ENCODE measurements at regions of chr12 and their contacts with region 1.

Region 1: DNA sequence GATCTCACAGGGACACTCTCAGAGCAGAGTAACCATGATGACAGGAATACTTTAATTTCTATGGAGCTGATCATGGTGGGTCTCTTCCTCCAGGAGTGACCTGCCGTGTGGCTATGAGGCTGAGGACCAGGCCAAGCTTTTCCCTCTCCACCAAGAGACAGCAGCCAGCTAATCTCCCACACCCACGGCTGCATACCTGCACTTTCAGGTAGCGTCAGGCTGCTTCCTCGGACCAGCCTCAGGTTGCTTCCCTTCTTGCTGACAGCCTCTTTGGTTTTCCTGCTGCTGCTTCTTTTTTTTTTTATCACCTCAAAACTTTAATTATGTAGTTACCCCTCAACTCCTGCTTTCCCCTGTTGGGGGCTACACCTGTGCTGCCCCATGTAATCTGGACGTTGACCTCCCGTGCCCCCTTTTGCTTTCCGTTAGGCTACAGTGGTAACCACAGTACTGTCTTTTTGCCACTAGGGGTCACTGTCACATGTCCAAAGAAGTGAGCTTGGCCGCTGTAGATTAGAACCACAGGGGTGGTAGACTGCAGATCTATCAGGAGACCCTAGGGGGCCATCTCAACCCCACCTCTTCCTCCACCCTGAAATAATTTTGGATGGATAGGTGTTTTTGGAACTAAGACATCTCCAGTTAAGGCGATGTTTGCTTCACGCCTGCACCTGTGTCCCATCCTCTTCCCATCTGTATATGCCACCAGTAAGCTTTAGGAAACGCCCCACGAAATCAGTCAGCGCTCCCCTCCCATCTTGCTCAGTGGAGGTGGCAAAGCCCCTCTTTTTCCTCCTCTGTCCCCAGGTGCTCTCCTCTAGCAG is 7.8 kb upstream of the PIP4K2C start:
- DNase-seq: peak; percentile 82
- ATAC-seq: peak; percentile 99
- H3K4me3 Mint-ChIP-seq: no peak overlapping the region
- H3K27ac Mint-ChIP-seq: no peak overlapping the region
- H3K4me1 Mint-ChIP-seq: peaks cover 4% of the 10 kb centered on the region
- H3K27me3 Mint-ChIP-seq: no peaks in the 10 kb centered on the region

Region 2: GRCh38 chr12:57609101-57609780 is 26.0 kb after region 1 on chr12:
- CTCF ChIA-PET with region 1: interaction called, 148 read pairs
- DNase-seq: no peak
- ATAC-seq: no peak
- H3K4me3 Mint-ChIP-seq: no peak overlapping the region
- H3K27ac Mint-ChIP-seq: no peak overlapping the region
- H3K4me1 Mint-ChIP-seq: peaks cover 17% of the 10 kb centered on the region
- H3K27me3 Mint-ChIP-seq: peaks cover 33% of the 10 kb centered on the region

Region 3: GRCh38 chr12:57627501-57628279 is 44.5 kb after region 1 on chr12:
- CTCF ChIA-PET with region 1: interaction called, 148 read pairs
- DNase-seq: peak; percentile 42
- ATAC-seq: peak; percentile 52
- H3K4me3 Mint-ChIP-seq: no peak overlapping the region
- H3K27ac Mint-ChIP-seq: no peak overlapping the region
- H3K4me1 Mint-ChIP-seq: peaks cover 11% of the 10 kb centered on the region
- H3K27me3 Mint-ChIP-seq: peaks cover 89% of the 10 kb centered on the region

Region 4: DNA sequence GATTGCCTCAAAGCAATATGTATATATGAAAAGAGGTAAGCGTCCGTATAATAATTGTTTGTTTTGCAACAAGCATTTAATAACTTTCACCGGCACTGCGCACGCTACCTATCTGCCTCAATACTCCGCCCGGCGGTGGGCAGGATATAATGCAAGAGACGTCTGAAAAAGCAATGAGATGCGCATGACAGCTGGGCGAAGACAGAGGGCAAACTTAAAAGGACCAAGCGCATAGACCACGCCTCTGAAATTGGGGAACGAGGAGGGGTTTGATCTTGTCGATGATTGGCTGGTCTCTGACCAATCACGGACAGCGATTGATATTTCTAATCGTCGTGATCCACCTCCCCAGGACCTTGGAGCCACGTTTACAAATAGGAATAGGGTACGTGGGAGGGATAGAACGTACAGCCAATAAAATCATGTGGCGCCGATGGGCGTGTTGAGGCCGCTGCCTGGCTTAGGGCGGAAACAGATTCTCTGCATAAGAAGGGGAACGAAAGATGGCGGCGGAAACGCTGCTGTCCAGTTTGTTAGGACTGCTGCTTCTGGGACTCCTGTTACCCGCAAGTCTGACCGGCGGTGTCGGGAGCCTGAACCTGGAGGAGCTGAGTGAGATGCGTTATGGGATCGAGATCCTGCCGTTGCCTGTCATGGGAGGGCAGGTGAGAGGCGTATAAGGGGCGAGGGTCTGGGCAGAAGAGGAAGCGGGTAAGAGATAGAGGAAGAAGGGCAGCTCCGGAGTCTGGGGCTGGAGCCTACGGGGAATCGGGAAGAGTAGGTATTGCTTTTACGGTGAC is 110.6 kb after region 1 on chr12 and contains the start of gene OS9:
- CTCF ChIA-PET with region 1: interaction called, 29 read pairs
- DNase-seq: peak; percentile 99
- ATAC-seq: peak; percentile 99
- H3K4me3 Mint-ChIP-seq: no peak within 1 kb of the TSS
- H3K27ac Mint-ChIP-seq: no peak within 1 kb of the TSS
- H3K4me1 Mint-ChIP-seq: peaks cover 3% of the 10 kb centered on the region
- H3K27me3 Mint-ChIP-seq: peaks cover 15% of the 10 kb centered on the region
- total RNA-seq, gene OS9: 117 to 123 TPM